Activated B cell treated with CpG ODN at 0.5 μM for 24 hours (primary cell): ENCODE measurements at regions of chr4 and their contacts with region 1.

Region 1: DNA sequence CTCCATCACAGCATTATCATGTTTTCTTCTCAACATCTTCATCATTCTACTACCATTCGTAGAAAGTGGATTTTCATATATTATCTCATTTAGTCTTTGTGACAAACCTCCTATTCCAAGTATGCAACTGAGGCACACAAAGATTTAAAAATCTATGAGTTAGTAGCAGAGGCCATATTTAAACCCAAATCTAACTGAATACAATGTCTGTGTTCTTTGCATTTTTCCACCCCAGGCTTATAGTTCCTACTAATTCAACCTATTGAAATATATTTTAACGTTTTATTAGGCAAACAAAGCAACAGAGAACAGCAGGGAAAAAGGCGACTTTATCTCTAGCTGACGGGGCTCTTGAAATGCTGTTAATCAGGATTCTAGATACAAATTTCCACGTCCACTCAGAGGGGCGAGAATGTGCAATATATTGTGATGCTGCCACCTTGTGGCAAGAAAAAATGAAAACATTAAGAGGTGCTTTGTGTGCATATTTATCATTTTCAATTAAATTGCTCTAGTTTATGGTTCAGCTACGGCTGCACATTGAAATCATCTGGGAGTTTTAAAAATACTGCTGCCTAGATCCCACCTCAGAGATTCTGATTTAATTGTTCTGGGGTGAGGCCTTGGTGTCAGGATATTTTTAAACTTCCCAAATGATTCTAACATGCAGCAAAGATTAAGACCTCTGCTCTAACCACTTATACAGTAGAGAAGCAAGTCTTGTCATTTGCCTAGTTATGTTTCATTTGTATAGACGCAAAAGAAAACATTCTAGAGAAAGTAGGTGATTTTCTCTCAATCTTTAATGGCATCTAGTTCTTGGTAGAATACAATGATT is 315.9 kb downstream of the MAPK10 start:
- DNase-seq: no peak
- ATAC-seq: no peak
- H3K4me3 Mint-ChIP-seq: no peak overlapping the region
- H3K27ac Mint-ChIP-seq: no peak overlapping the region
- H3K4me1 Mint-ChIP-seq: no peaks in the 10 kb centered on the region
- H3K27me3 Mint-ChIP-seq: peaks cover 2% of the 10 kb centered on the region
- CTCF ChIP-seq: peak; percentile 43

Region 2: GRCh38 chr4:85084380-85085094 is 959.4 kb before region 1 on chr4:
- CTCF ChIA-PET with region 1: interaction called, 106 read pairs
- POLR2A ChIA-PET with region 1: interaction called, 4 read pairs
- intact Hi-C with region 1: loop called (anchors 1 kb)
- DNase-seq: no peak
- ATAC-seq: peak; percentile 56
- H3K4me3 Mint-ChIP-seq: no peak overlapping the region
- H3K27ac Mint-ChIP-seq: no peak overlapping the region
- H3K4me1 Mint-ChIP-seq: peaks cover 5% of the 10 kb centered on the region
- H3K27me3 Mint-ChIP-seq: peaks cover 7% of the 10 kb centered on the region
- CTCF ChIP-seq: no peak

Region 3: DNA sequence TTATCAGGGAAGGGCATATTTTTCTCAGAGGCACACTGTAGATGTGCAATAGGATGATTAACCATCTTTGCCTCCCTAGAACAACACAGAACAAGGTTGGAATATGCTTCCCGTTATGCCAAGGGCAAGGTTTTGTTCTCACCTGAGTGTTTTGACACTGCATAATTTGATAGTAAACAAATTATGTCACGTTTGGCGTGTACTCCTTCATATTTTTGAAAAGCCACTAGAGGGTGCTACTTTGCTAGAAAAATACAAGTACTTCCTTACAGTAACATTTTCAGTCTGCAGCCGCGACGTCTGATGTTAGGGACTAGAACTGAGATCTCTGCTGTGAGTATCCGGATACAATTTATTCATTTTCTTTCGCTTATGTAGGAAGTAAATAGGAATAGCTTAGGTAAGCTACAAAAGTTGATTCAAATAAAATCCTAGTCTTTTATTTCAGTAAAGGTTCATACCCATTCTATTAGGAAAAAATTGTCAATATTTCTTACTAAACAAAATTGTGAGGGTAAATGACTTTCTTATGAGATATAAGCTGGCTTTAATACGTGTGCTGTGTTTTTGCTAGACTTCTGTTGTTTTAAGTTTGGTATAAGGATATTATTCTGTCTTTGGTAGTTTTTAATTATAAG is 896.4 kb before region 1 on chr4:
- CTCF ChIA-PET with region 1: interaction called, 27 read pairs
- POLR2A ChIA-PET with region 1: no interaction called
- intact Hi-C with region 1: loop called (anchors 1 kb)
- DNase-seq: no peak
- ATAC-seq: peak; percentile 86
- H3K4me3 Mint-ChIP-seq: no peak overlapping the region
- H3K27ac Mint-ChIP-seq: no peak overlapping the region
- H3K4me1 Mint-ChIP-seq: peaks cover 5% of the 10 kb centered on the region
- H3K27me3 Mint-ChIP-seq: no peaks in the 10 kb centered on the region
- CTCF ChIP-seq: peak; percentile 40

Region 4: DNA sequence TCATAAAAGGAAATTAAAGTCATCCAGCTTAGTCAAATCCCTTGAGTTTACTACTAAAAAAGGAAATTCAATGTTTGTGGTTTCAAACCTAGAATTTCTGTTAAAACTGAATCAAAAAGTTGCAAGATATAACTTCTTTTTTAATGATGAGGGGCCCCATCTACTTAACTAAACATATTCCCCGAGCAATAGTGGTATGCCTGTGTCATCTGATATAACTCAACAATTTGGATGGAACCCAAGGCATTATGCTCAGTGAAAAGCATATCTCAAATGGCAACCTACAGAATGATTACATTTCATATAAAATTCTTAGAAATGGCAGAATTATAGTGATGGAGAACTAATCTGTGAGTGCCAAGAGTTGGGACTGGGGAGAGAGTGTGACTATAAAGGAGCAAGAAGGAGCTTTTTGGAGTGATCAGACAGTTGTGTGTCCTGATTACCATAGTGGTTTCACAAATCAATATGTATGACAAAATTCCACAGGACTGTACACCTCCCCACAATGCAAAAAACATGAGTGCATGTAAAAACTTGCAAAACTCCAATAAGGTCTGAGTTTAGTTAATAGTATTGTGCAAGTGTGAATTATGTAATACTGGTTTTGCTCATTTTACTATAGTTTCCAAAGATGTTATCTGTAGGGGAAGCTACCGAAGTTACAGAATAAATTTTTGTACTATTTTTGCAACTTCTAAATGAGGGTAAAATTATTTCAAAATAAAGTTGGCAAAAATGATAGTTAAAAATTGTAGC is 245.8 kb before region 1 on chr4:
- CTCF ChIA-PET with region 1: no interaction called
- POLR2A ChIA-PET with region 1: no interaction called
- intact Hi-C with region 1: loop called (anchors 2 kb)
- DNase-seq: no peak
- ATAC-seq: no peak
- H3K4me3 Mint-ChIP-seq: no peak overlapping the region
- H3K27ac Mint-ChIP-seq: no peak overlapping the region
- H3K4me1 Mint-ChIP-seq: peaks cover 16% of the 10 kb centered on the region
- H3K27me3 Mint-ChIP-seq: no peaks in the 10 kb centered on the region
- CTCF ChIP-seq: no peak

Region 5: GRCh38 chr4:86019906-86020305 is 24.1 kb before region 1 on chr4:
- CTCF ChIA-PET with region 1: no interaction called
- POLR2A ChIA-PET with region 1: no interaction called
- intact Hi-C with region 1: no loop called
- DNase-seq: no peak
- ATAC-seq: no peak
- H3K4me3 Mint-ChIP-seq: no peak overlapping the region
- H3K27ac Mint-ChIP-seq: no peak overlapping the region
- H3K4me1 Mint-ChIP-seq: peaks cover 5% of the 10 kb centered on the region
- H3K27me3 Mint-ChIP-seq: no peaks in the 10 kb centered on the region
- CTCF ChIP-seq: no peak

Region 6: DNA sequence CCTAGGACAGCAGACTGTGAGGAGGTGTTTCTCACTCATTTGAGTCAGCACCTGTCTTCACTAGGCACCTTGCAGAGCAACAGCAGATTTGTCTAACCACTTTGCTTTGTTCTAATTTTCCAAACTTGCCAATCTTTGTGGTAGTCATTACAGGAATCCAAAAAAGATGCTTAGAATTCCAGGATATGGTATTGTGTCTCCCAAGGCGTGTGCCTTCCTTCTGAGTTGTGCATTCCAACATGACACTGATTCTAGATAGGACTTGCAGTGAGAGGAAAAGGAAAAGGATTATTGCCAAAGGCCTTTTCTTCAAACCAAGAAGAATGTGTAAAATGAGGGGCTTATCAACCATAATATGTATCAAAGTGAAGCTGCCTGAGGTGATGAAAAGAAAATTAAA is 189.7 kb after region 1 on chr4:
- CTCF ChIA-PET with region 1: no interaction called
- POLR2A ChIA-PET with region 1: no interaction called
- intact Hi-C with region 1: no loop called
- DNase-seq: no peak
- ATAC-seq: no peak
- H3K4me3 Mint-ChIP-seq: no peak overlapping the region
- H3K27ac Mint-ChIP-seq: no peak overlapping the region
- H3K4me1 Mint-ChIP-seq: no peaks in the 10 kb centered on the region
- H3K27me3 Mint-ChIP-seq: no peaks in the 10 kb centered on the region
- CTCF ChIP-seq: no peak

Region 7: GRCh38 chr4:86895692-86896488 is 851.9 kb after region 1 on chr4:
- CTCF ChIA-PET with region 1: no interaction called
- POLR2A ChIA-PET with region 1: no interaction called
- intact Hi-C with region 1: loop called (anchors 10 kb)
- DNase-seq: no peak
- ATAC-seq: no peak
- H3K4me3 Mint-ChIP-seq: no peak overlapping the region
- H3K27ac Mint-ChIP-seq: no peak overlapping the region
- H3K4me1 Mint-ChIP-seq: peaks cover 9% of the 10 kb centered on the region
- H3K27me3 Mint-ChIP-seq: peaks cover 18% of the 10 kb centered on the region
- CTCF ChIP-seq: peak; percentile 79